ENCODE measurements at regions of chr10 and their contacts with region 1.

Region 1: DNA sequence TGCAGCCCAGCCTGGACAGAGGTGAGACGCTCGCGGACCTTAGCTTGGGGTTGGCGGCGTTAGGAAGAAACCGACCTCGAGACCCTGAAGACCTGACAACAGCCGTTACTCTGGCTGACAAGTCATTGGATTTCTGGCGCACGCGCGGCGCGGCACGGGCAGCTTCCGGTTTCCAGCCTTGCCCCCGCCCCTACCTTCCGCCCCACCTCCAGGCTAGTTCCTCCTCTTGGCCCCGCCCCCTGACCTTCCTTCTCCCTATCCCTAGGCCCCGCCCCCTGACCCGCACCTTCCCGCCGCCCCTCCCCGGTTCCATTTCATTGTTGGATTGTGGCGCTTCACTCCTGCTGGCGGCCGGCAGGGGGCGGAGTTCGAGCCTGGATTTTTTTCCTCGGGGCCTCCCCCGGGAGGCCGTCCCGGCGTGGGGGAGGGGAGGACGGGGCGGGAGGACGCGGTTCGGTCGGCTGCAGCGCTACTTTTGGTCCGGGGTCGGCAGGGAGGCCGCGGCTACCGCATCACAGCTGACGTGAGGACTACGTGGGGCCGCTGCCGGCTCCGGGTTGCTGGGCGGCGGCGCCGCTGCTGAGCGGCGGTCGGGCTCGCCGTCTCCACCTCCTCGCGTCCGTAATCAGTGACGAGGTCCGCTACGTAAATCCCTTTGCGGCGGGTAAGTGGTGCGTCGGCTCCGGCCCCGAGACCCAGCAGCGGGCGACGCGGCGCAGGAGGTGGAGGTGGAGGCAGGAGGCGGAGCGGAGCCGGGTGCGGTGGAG is at the start of gene CREM:
- DNase-seq: peak; percentile 97 to 98 (median 98)
- H3K4me3 ChIP-seq: peak within 1 kb of the TSS; percentile 75 to 94 (median 86)
- H3K27ac ChIP-seq: peak within 1 kb of the TSS; percentile 98 to 99
- H3K4me1 ChIP-seq: peaks cover 1 to 21% (median 11%) of the 10 kb centered on the region in 4 experiments
- H3K27me3 ChIP-seq: no peaks in the 10 kb centered on the region

Region 2: GRCh38 chr10:35165136-35165535 is 38.4 kb after region 1 on chr10:
- CTCF ChIA-PET with region 1: no interaction called
- POLR2A ChIA-PET with region 1: no interaction called
- DNase-seq: no peak
- H3K4me3 ChIP-seq: no peak overlapping the region
- H3K27ac ChIP-seq: no peak overlapping the region
- H3K4me1 ChIP-seq: no peaks in the 10 kb centered on the region
- H3K27me3 ChIP-seq: no peaks in the 10 kb centered on the region

Region 3: GRCh38 chr10:35218339-35218955 is 91.7 kb after region 1 on chr10:
- CTCF ChIA-PET with region 1: interaction called, 193 read pairs
- POLR2A ChIA-PET with region 1: interaction called, 8 read pairs
- DNase-seq: peak; percentile 88 to 95 (median 93)
- H3K4me3 ChIP-seq: no peak overlapping the region
- H3K27ac ChIP-seq: no peak overlapping the region
- H3K4me1 ChIP-seq: peaks cover 0 to 16% (median 7%) of the 10 kb centered on the region in 4 experiments
- H3K27me3 ChIP-seq: no peaks in the 10 kb centered on the region

Measured in common myeloid progenitor, CD34-positive (primary cell).